CD4-positive, alpha-beta T cell (primary cell): ENCODE measurements at regions of chr12 and their contacts with region 1.

Region 1: GRCh38 chr12:96399919-96400797 is at the start of gene CDK17:
- DNase-seq: peak; percentile 82 to 97 (median 88)
- ATAC-seq: peak; percentile 63
- H3K4me3 ChIP-seq: peak within 1 kb of the TSS; percentile 88
- H3K4me3 Mint-ChIP-seq: peak within 1 kb of the TSS; percentile 99
- H3K27ac ChIP-seq: peak within 1 kb of the TSS; percentile 86 to 99
- H3K27ac Mint-ChIP-seq: peak within 1 kb of the TSS; percentile 93
- H3K4me1 ChIP-seq: peaks cover 15% of the 10 kb centered on the region
- H3K4me1 Mint-ChIP-seq: peaks cover 49% of the 10 kb centered on the region
- H3K27me3 ChIP-seq: no peaks in the 10 kb centered on the region
- H3K27me3 Mint-ChIP-seq: no peaks in the 10 kb centered on the region
- CTCF ChIP-seq: no peak
- total RNA-seq, gene CDK17: 112 to 113 TPM

Region 2: GRCh38 chr12:96194971-96195844 is 204.9 kb before region 1 on chr12:
- CTCF ChIA-PET with region 1: interaction called, 8 read pairs
- POLR2A ChIA-PET with region 1: interaction called, 23 read pairs
- intact Hi-C with region 1: loop called in 1 of 2 experiments (anchors 1 kb)
- DNase-seq: peak; percentile 47 to 95 (median 69)
- ATAC-seq: peak; percentile 72
- H3K4me3 ChIP-seq: peak overlapping the region; percentile 96
- H3K4me3 Mint-ChIP-seq: peak overlapping the region; percentile 96
- H3K27ac ChIP-seq: peak overlapping the region; percentile 85 to 98
- H3K27ac Mint-ChIP-seq: peak overlapping the region; percentile 97
- H3K4me1 ChIP-seq: peaks cover 33% of the 10 kb centered on the region
- H3K4me1 Mint-ChIP-seq: peaks cover 62% of the 10 kb centered on the region
- H3K27me3 ChIP-seq: no peaks in the 10 kb centered on the region
- H3K27me3 Mint-ChIP-seq: no peaks in the 10 kb centered on the region
- CTCF ChIP-seq: no peak

Region 3: GRCh38 chr12:96285158-96285557 is 115.0 kb before region 1 on chr12:
- CTCF ChIA-PET with region 1: interaction called, 5 read pairs
- POLR2A ChIA-PET with region 1: interaction called, 10 read pairs
- intact Hi-C with region 1: no loop called
- DNase-seq: no peak
- ATAC-seq: no peak
- H3K4me3 ChIP-seq: no peak overlapping the region
- H3K4me3 Mint-ChIP-seq: no peak overlapping the region
- H3K27ac ChIP-seq: no peak overlapping the region
- H3K27ac Mint-ChIP-seq: peak overlapping the region; percentile 22
- H3K4me1 ChIP-seq: no peaks in the 10 kb centered on the region
- H3K4me1 Mint-ChIP-seq: peaks cover 19% of the 10 kb centered on the region
- H3K27me3 ChIP-seq: no peaks in the 10 kb centered on the region
- H3K27me3 Mint-ChIP-seq: no peaks in the 10 kb centered on the region
- CTCF ChIP-seq: no peak

Region 4: DNA sequence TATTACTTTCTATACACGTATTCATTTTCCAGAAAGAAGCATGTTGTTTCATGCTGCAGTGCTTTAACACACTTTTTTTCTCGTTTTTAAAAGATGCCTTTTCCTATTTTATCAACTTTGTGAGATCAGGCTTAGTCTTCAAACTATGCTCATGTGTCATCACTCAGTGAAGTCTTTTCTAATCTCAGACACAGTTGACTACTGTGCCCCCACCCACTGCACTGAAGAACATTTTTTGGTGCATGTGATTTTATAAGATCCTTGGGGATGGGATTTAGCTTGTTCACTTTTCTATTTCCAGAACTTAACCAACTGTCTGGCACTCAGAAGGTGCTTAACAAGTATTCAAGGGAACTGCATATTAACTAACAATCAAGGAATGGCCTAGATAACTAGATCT is 85.4 kb before region 1 on chr12:
- CTCF ChIA-PET with region 1: interaction called, 3 read pairs
- POLR2A ChIA-PET with region 1: interaction called, 67 read pairs
- intact Hi-C with region 1: loop called in 1 of 2 experiments (anchors 5 kb)
- DNase-seq: no peak
- ATAC-seq: no peak
- H3K4me3 ChIP-seq: no peak overlapping the region
- H3K4me3 Mint-ChIP-seq: peak overlapping the region; percentile 67
- H3K27ac ChIP-seq: peak overlapping the region in 1 of 2 donors; percentile 25
- H3K27ac Mint-ChIP-seq: peak overlapping the region; percentile 18
- H3K4me1 ChIP-seq: no peaks in the 10 kb centered on the region
- H3K4me1 Mint-ChIP-seq: peaks cover 36% of the 10 kb centered on the region
- H3K27me3 ChIP-seq: no peaks in the 10 kb centered on the region
- H3K27me3 Mint-ChIP-seq: no peaks in the 10 kb centered on the region
- CTCF ChIP-seq: no peak

Region 5: GRCh38 chr12:96361074-96361473 is 39.1 kb before region 1 on chr12:
- CTCF ChIA-PET with region 1: interaction called, 3 read pairs
- POLR2A ChIA-PET with region 1: interaction called, 8 read pairs
- intact Hi-C with region 1: loop called in 1 of 2 experiments (anchors 5 kb)
- DNase-seq: no peak
- ATAC-seq: no peak
- H3K4me3 ChIP-seq: no peak overlapping the region
- H3K4me3 Mint-ChIP-seq: no peak overlapping the region
- H3K27ac ChIP-seq: no peak overlapping the region
- H3K27ac Mint-ChIP-seq: no peak overlapping the region
- H3K4me1 ChIP-seq: peaks cover 24% of the 10 kb centered on the region
- H3K4me1 Mint-ChIP-seq: peaks cover 87% of the 10 kb centered on the region
- H3K27me3 ChIP-seq: no peaks in the 10 kb centered on the region
- H3K27me3 Mint-ChIP-seq: no peaks in the 10 kb centered on the region
- CTCF ChIP-seq: no peak

Region 6: GRCh38 chr12:96445691-96446583 is 45.8 kb after region 1 on chr12:
- CTCF ChIA-PET with region 1: interaction called, 49 read pairs
- POLR2A ChIA-PET with region 1: interaction called, 57 read pairs
- intact Hi-C with region 1: loop called in 1 of 2 experiments (anchors 1 kb)
- DNase-seq: peak in 13 of 14 experiments; percentile 12 to 94 (median 44)
- ATAC-seq: peak; percentile 94
- H3K4me3 ChIP-seq: no peak overlapping the region
- H3K4me3 Mint-ChIP-seq: peak overlapping the region; percentile 55
- H3K27ac ChIP-seq: peak overlapping the region; percentile 74 to 92
- H3K27ac Mint-ChIP-seq: peak overlapping the region; percentile 98
- H3K4me1 ChIP-seq: peaks cover 32% of the 10 kb centered on the region
- H3K4me1 Mint-ChIP-seq: peaks cover 42% of the 10 kb centered on the region
- H3K27me3 ChIP-seq: no peaks in the 10 kb centered on the region
- H3K27me3 Mint-ChIP-seq: no peaks in the 10 kb centered on the region
- CTCF ChIP-seq: no peak

Region 7: GRCh38 chr12:96948782-96949181 is 548.6 kb after region 1 on chr12:
- CTCF ChIA-PET with region 1: no interaction called
- POLR2A ChIA-PET with region 1: no interaction called
- intact Hi-C with region 1: no loop called
- DNase-seq: no peak
- ATAC-seq: no peak
- H3K4me3 ChIP-seq: no peak overlapping the region
- H3K4me3 Mint-ChIP-seq: no peak overlapping the region
- H3K27ac ChIP-seq: no peak overlapping the region
- H3K27ac Mint-ChIP-seq: no peak overlapping the region
- H3K4me1 ChIP-seq: no peaks in the 10 kb centered on the region
- H3K4me1 Mint-ChIP-seq: no peaks in the 10 kb centered on the region
- H3K27me3 ChIP-seq: no peaks in the 10 kb centered on the region
- H3K27me3 Mint-ChIP-seq: no peaks in the 10 kb centered on the region
- CTCF ChIP-seq: no peak